H1 (cell line): ENCODE measurements at regions of chr17 and their contacts with region 1.

Region 1: DNA sequence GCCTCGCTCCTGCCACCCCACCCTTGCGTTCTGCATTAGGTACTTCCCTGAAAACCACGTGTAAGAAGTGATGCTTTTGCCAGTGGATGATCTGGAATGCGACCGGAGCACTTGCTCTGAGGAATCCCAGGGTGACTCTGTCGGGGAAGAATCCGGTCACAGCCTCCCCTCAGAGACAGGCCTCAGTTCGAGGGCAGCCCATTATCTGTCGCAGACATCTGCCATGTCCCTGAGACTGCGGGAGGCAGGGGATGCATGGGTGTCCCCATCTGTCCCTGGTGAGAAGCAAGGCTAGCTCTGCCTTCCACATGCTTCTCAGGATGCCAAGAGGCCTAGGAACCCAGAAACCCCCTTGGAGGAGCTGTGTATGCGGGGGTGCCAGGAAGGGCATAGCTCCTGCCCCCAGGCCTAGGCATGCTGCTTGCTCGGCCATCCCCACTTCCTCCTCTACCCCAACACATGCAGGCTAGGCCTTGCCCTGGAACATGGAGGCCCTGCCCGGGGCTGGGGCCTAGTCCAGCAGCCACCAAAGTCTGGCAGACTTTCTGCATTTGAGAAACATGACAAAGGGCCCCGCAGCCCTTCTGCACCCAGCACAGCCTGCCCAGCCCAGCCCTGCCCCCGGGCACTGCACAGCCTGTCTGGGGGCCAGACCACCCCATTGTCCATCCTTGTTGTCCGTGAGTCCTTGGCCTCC is 20.5 kb downstream of the MNT start:
- DNase-seq: no peak
- H3K4me3 ChIP-seq: no peak overlapping the region
- H3K27ac ChIP-seq: no peak overlapping the region
- H3K4me1 ChIP-seq: peaks cover 0 to 10% (median 4%) of the 10 kb centered on the region in 4 experiments; a peak in 5 of 7 replicates
- H3K27me3 ChIP-seq: no peaks in the 10 kb centered on the region
- CTCF ChIP-seq: no peak
- EP300 ChIP-seq: no peak
- POLR2A ChIP-seq: no peak
- RAD21 ChIP-seq: no peak

Region 2: GRCh38 chr17:2244545-2245525 is 135.5 kb before region 1 on chr17:
- CTCF ChIA-PET with region 1: no interaction called
- POLR2A ChIA-PET with region 1: no interaction called
- DNase-seq: peak; percentile 50 to 90
- H3K4me3 ChIP-seq: no peak overlapping the region
- H3K27ac ChIP-seq: no peak overlapping the region
- H3K4me1 ChIP-seq: no peaks in the 10 kb centered on the region
- H3K27me3 ChIP-seq: no peaks in the 10 kb centered on the region
- CTCF ChIP-seq: peak; percentile 97 to 100 (median 99)
- EP300 ChIP-seq: no peak
- POLR2A ChIP-seq: no peak
- RAD21 ChIP-seq: peak; percentile 99

Region 3: DNA sequence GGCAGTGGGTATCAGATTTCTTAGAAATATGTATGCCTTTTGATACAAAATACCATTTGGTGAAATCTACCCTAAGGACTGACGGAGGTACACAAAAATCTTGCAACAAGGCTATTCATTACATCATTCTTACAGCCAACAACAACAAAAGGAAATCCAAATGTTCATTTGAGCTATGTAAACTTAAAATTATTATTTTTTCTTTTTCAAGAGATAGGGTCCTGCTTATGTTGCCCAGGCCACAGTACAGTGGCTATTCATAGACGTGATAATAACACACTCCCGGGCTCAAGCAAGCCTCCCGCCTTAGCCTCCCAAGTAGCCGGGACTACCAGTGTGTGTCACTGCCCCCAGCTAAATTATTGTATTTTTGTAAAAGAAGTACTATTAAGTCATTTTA is 67.6 kb before region 1 on chr17:
- CTCF ChIA-PET with region 1: no interaction called
- POLR2A ChIA-PET with region 1: no interaction called
- DNase-seq: no peak
- H3K4me3 ChIP-seq: no peak overlapping the region
- H3K27ac ChIP-seq: no peak overlapping the region
- H3K4me1 ChIP-seq: no peaks in the 10 kb centered on the region
- H3K27me3 ChIP-seq: no peaks in the 10 kb centered on the region
- CTCF ChIP-seq: no peak
- EP300 ChIP-seq: no peak
- POLR2A ChIP-seq: no peak
- RAD21 ChIP-seq: no peak

Region 4: GRCh38 chr17:2392252-2393173 is 12.1 kb after region 1 on chr17:
- CTCF ChIA-PET with region 1: interaction called, 209 read pairs
- POLR2A ChIA-PET with region 1: interaction called, 193 read pairs
- DNase-seq: peak; percentile 83 to 97
- H3K4me3 ChIP-seq: peak overlapping the region; percentile 64 to 85 (median 76)
- H3K27ac ChIP-seq: peak overlapping the region; percentile 56; the same call in 1 of the 2 replicates
- H3K4me1 ChIP-seq: peaks cover 14 to 37% (median 22%) of the 10 kb centered on the region in 4 experiments
- H3K27me3 ChIP-seq: no peaks in the 10 kb centered on the region
- CTCF ChIP-seq: no peak
- EP300 ChIP-seq: no peak
- POLR2A ChIP-seq: 0 out of 3 replicates have a peak, but pooled peaks of 1 of the 2 experiments have one; percentile 38
- RAD21 ChIP-seq: no peak

Region 5: DNA sequence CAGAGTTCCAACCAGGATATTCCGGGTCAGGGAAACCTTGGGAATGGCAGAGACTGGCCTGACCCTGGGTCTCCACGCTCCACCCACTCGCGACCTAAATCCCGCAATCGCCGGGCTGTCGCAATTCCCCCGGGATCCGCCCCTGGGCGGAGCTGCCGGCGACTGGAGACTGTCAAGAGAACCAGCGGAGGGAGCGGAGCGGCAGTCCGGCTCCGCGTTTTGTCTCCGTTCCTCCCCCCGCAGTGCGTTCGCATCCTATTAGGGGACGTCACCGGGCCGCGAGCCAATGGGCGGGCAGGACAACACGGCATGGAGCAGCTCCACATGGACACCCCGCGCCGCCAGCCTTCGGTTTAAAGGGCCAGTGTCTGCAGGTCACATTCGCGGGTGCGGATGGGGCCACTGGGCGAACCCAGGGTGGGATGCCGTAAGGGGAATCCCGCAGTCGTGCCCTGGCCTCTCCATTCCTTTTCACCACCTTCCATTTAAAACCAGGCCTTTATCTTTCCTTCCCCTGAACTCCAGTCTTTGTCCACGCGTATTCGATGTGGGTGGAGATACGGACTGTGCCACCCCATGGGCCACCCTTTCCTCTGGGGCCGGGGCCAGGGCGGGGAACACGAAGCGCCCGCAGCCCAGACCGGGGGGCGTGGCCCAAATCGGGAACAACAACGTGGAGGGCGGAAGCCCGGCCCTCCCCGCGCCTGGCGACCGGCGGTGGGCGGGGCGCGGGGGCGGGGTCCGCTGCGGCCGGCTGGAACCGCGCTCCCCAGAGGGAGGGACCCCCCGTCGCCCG is 21.2 kb after region 1 on chr17:
- CTCF ChIA-PET with region 1: interaction called, 135 read pairs
- POLR2A ChIA-PET with region 1: interaction called, 193 read pairs
- DNase-seq: peak; percentile 93 to 99
- H3K4me3 ChIP-seq: peak overlapping the region; percentile 79 to 96 (median 84)
- H3K27ac ChIP-seq: peak overlapping the region; percentile 94
- H3K4me1 ChIP-seq: peaks cover 3 to 24% (median 16%) of the 10 kb centered on the region in 4 experiments
- H3K27me3 ChIP-seq: peaks cover 0 to 2% (median 0%) of the 10 kb centered on the region in 4 experiments; a peak in 2 of 7 replicates
- CTCF ChIP-seq: no peak
- EP300 ChIP-seq: peak in 1 of 2 experiments; percentile 21; a peak in 1 of 3 replicates
- POLR2A ChIP-seq: peak; percentile 73 to 80
- RAD21 ChIP-seq: no peak

Region 6: DNA sequence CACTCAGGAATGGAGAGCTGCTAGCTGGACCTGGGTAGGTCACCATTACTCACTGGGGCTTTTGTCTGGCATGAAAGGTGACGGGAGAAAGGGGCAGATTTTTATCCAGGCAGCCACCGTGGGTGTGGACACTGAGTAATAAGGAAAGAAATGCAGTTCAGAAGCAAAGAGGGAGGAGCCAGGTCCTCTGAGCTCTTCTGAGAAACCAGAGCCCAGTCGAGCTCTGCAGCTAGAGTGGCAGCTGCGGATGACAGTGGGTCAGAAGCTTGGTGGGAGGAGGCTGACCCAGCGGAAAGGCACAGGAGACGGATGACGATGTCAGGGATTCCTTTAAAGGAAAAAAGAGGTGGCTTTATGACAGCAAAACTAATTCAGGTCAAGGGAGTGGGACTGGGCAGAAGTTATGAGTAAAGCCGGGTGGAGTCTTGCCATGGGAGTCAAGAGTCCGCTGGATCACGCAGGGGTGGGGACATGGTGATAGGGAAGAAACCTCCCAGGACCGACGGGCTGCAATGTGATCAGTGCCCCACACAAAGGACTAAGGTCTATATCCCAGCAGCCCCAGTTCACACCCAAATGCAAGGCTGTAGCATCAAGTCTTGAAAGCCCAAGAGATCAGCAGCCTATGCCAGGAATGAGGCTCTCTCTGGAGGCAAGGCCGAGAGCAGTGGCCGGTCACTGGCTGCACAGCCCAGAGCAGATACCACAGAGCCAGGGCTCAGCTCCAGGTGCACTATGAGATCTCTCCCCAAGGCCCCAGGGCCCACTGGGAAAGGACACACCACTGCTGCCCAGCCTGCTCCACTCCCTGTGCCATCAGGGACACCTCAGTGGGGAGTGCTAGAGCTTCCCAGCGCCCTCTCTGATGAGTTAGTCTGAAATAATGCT is 26.8 kb after region 1 on chr17:
- CTCF ChIA-PET with region 1: interaction called, 135 read pairs
- POLR2A ChIA-PET with region 1: interaction called, 193 read pairs
- DNase-seq: no peak
- H3K4me3 ChIP-seq: no peak overlapping the region
- H3K27ac ChIP-seq: no peak overlapping the region
- H3K4me1 ChIP-seq: peaks cover 0 to 3% (median 0%) of the 10 kb centered on the region in 4 experiments; a peak in 2 of 7 replicates
- H3K27me3 ChIP-seq: peaks cover 0 to 2% (median 0%) of the 10 kb centered on the region in 4 experiments; a peak in 2 of 7 replicates
- CTCF ChIP-seq: no peak
- EP300 ChIP-seq: no peak
- POLR2A ChIP-seq: no peak
- RAD21 ChIP-seq: no peak